HCT116 (cell line): ENCODE measurements at regions of chr6 and their contacts with region 1.

Region 1: GRCh38 chr6:168071336-168072019 is 7.5 kb downstream of the FRMD1 start:
- DNase-seq: no peak
- ATAC-seq: peak; percentile 91
- H3K4me3 ChIP-seq: no peak overlapping the region
- H3K27ac ChIP-seq: no peak overlapping the region
- H3K4me1 ChIP-seq: no peaks in the 10 kb centered on the region
- H3K27me3 ChIP-seq: no peaks in the 10 kb centered on the region
- CTCF ChIP-seq: peak; percentile 9 to 62 (median 53); a peak in 5 of 6 replicates
- POLR2A ChIP-seq: no peak
- RAD21 ChIP-seq: peak; percentile 30

Region 2: GRCh38 chr6:168117942-168118341 is 46.5 kb after region 1 on chr6:
- CTCF ChIA-PET with region 1: interaction called, 3 read pairs
- POLR2A ChIA-PET with region 1: no interaction called
- RAD21 ChIA-PET with region 1: no interaction called
- intact Hi-C with region 1: loop called (anchors 5 kb)
- DNase-seq: no peak
- ATAC-seq: no peak
- H3K4me3 ChIP-seq: no peak overlapping the region
- H3K27ac ChIP-seq: no peak overlapping the region
- H3K4me1 ChIP-seq: no peaks in the 10 kb centered on the region
- H3K27me3 ChIP-seq: no peaks in the 10 kb centered on the region
- CTCF ChIP-seq: peak; percentile 50 to 57 (median 52)
- POLR2A ChIP-seq: no peak
- RAD21 ChIP-seq: peak; percentile 70

Region 3: GRCh38 chr6:168737481-168737880 is 666.0 kb after region 1 on chr6:
- CTCF ChIA-PET with region 1: no interaction called
- POLR2A ChIA-PET with region 1: no interaction called
- RAD21 ChIA-PET with region 1: no interaction called
- intact Hi-C with region 1: no loop called
- DNase-seq: peak; percentile 27
- ATAC-seq: peak; percentile 80
- H3K4me3 ChIP-seq: no peak overlapping the region
- H3K27ac ChIP-seq: no peak overlapping the region
- H3K4me1 ChIP-seq: peaks cover 0 to 4% of the 10 kb centered on the region in 2 experiments; a peak in 1 of 4 replicates
- H3K27me3 ChIP-seq: no peaks in the 10 kb centered on the region
- CTCF ChIP-seq: peak in 2 of 3 experiments; percentile 40 to 46; a peak in 4 of 6 replicates
- POLR2A ChIP-seq: no peak
- RAD21 ChIP-seq: peak; percentile 44; the same call in 1 of the 2 replicates